MCF 10A (cell line): ENCODE measurements at regions of chr11 and their contacts with region 1.

Region 1: GRCh38 chr11:9802291-9802861 is 138.5 kb downstream of the SWAP70 start:
- DNase-seq: peak; percentile 38
- H3K4me3 Mint-ChIP-seq: peak overlapping the region; percentile 6
- H3K27ac Mint-ChIP-seq: peak overlapping the region; percentile 97
- H3K4me1 Mint-ChIP-seq: peaks cover 12% of the 10 kb centered on the region
- H3K27me3 Mint-ChIP-seq: no peaks in the 10 kb centered on the region
- CTCF ChIP-seq: no peak

Region 2: GRCh38 chr11:9815486-9816136 is 13.2 kb after region 1 on chr11:
- CTCF ChIA-PET with region 1: no interaction called
- POLR2A ChIA-PET with region 1: interaction called, 69 read pairs
- intact Hi-C with region 1: no loop called
- DNase-seq: peak; percentile 86
- H3K4me3 Mint-ChIP-seq: no peak overlapping the region
- H3K27ac Mint-ChIP-seq: no peak overlapping the region
- H3K4me1 Mint-ChIP-seq: peaks cover 12% of the 10 kb centered on the region
- H3K27me3 Mint-ChIP-seq: no peaks in the 10 kb centered on the region
- CTCF ChIP-seq: no peak

Region 3: GRCh38 chr11:9831122-9831521 is 28.7 kb after region 1 on chr11:
- CTCF ChIA-PET with region 1: no interaction called
- POLR2A ChIA-PET with region 1: interaction called, 12 read pairs
- intact Hi-C with region 1: no loop called
- DNase-seq: no peak
- H3K4me3 Mint-ChIP-seq: no peak overlapping the region
- H3K27ac Mint-ChIP-seq: no peak overlapping the region
- H3K4me1 Mint-ChIP-seq: no peaks in the 10 kb centered on the region
- H3K27me3 Mint-ChIP-seq: no peaks in the 10 kb centered on the region
- CTCF ChIP-seq: no peak

Region 4: DNA sequence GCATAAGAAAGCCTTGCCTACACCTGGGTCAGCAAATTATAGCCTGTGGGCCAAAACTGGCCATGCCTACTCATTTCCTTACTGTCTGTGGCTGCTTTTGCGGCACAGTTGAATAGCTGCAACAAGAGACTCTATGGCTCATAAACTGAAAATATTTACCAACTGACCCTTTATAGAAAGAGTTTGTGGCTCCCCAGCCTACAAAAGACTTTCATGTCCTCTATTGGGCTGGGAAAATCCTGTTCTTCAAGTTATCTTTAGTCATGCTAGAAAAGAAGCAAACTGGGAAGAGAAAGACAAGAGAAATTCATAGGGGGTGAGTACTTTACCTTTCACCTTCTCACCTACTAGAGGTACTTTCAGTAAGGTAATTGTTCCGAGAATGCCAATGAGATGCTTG is 36.6 kb after region 1 on chr11:
- CTCF ChIA-PET with region 1: interaction called, 3 read pairs
- POLR2A ChIA-PET with region 1: interaction called, 15 read pairs
- intact Hi-C with region 1: no loop called
- DNase-seq: peak; percentile 69
- H3K4me3 Mint-ChIP-seq: peak overlapping the region; percentile 30
- H3K27ac Mint-ChIP-seq: peak overlapping the region; percentile 81
- H3K4me1 Mint-ChIP-seq: peaks cover 18% of the 10 kb centered on the region
- H3K27me3 Mint-ChIP-seq: no peaks in the 10 kb centered on the region
- CTCF ChIP-seq: no peak